ENCODE measurements at regions of chr1 and their contacts with region 1.

Region 1: DNA sequence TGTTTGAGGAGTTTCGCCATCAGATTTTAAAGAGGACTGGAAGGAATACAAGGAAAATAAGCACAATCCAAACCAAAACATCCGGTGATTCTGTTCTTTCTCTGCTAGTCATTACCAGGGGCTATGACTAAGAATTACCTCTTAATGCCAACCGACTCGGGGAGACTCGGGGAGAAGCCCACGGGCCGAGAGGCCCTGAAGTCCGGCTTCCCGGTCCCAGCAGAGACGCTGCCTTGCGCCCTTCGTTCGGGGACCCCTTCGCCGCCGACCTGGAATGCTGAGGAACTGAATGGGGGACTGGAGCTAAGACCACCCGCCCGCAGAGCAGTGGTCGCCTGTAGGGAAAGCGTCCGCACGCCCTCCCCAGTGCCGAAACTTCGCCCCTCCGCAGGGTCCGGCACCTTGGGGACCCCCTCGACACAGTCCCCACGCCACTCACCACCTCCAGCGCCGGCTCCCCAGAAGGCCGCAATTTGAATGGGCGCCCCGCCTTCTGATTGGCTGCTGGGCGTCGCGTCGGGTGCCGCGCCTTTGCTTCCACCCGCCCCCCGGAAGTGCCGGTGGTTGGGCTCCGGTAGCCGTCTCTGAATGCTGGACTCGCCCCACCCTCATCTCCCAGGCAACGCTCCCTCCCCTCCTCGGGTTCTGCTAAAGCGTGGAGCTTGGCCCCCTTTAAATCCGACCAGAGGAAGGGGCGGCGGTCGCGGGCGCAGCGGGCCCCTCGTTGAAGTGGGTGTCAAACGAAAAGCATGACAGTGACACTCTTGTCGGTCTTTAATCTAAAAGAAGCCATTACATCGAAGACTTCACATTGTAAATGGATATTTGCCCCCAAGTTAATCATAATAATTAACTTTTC is at the start of gene KIF14:
- DNase-seq: peak; percentile 91 to 94
- ATAC-seq: peak; percentile 98 to 99 (median 98)
- H3K4me3 ChIP-seq: peak within 1 kb of the TSS; percentile 61
- H3K4me3 Mint-ChIP-seq: peak within 1 kb of the TSS; percentile 99
- H3K27ac ChIP-seq: peak within 1 kb of the TSS; percentile 53
- H3K27ac Mint-ChIP-seq: peak within 1 kb of the TSS; percentile 90 to 97
- H3K4me1 ChIP-seq: peaks cover 11% of the 10 kb centered on the region
- H3K4me1 Mint-ChIP-seq: peaks cover 11 to 12% of the 10 kb centered on the region in 2 donors
- H3K27me3 ChIP-seq: no peaks in the 10 kb centered on the region
- H3K27me3 Mint-ChIP-seq: no peaks in the 10 kb centered on the region
- CTCF ChIP-seq: no peak
- total RNA-seq, gene KIF14: 0.40 to 0.48 (median 0.40) TPM

Region 2: GRCh38 chr1:199747984-199748383 is 872.5 kb before region 1 on chr1:
- intact Hi-C with region 1: no loop called
- DNase-seq: no peak
- ATAC-seq: no peak
- H3K4me3 ChIP-seq: no peak overlapping the region
- H3K4me3 Mint-ChIP-seq: no peak overlapping the region
- H3K27ac ChIP-seq: no peak overlapping the region
- H3K27ac Mint-ChIP-seq: no peak overlapping the region
- H3K4me1 ChIP-seq: no peaks in the 10 kb centered on the region
- H3K4me1 Mint-ChIP-seq: no peaks in the 10 kb centered on the region
- H3K27me3 ChIP-seq: no peaks in the 10 kb centered on the region
- H3K27me3 Mint-ChIP-seq: no peaks in the 10 kb centered on the region
- CTCF ChIP-seq: no peak

Region 3: GRCh38 chr1:200669314-200670241 is 49.1 kb after region 1 on chr1 and contains the start of gene DDX59:
- intact Hi-C with region 1: loop called (anchors 1 kb)
- DNase-seq: peak; percentile 83 to 93
- ATAC-seq: peak; percentile 83 to 91 (median 84)
- H3K4me3 ChIP-seq: peak within 1 kb of the TSS; percentile 63
- H3K4me3 Mint-ChIP-seq: peak within 1 kb of the TSS; percentile 94
- H3K27ac ChIP-seq: peak within 1 kb of the TSS; percentile 88
- H3K27ac Mint-ChIP-seq: peak within 1 kb of the TSS; percentile 78 to 92
- H3K4me1 ChIP-seq: peaks cover 13% of the 10 kb centered on the region
- H3K4me1 Mint-ChIP-seq: peaks cover 37 to 41% of the 10 kb centered on the region in 2 donors
- H3K27me3 ChIP-seq: no peaks in the 10 kb centered on the region
- H3K27me3 Mint-ChIP-seq: no peaks in the 10 kb centered on the region
- CTCF ChIP-seq: no peak
- total RNA-seq, gene DDX59: 31.9 to 39.9 (median 38.7) TPM

Region 4: GRCh38 chr1:200802865-200803512 is 182.5 kb after region 1 on chr1:
- intact Hi-C with region 1: loop called (anchors 1 kb)
- DNase-seq: peak; percentile 48 to 89
- ATAC-seq: peak; percentile 82 to 89 (median 85)
- H3K4me3 ChIP-seq: no peak overlapping the region
- H3K4me3 Mint-ChIP-seq: no peak overlapping the region
- H3K27ac ChIP-seq: no peak overlapping the region
- H3K27ac Mint-ChIP-seq: no peak overlapping the region
- H3K4me1 ChIP-seq: no peaks in the 10 kb centered on the region
- H3K4me1 Mint-ChIP-seq: peaks cover 0 to 6% of the 10 kb centered on the region in 2 donors
- H3K27me3 ChIP-seq: no peaks in the 10 kb centered on the region
- H3K27me3 Mint-ChIP-seq: peaks cover 19 to 27% of the 10 kb centered on the region in 2 donors
- CTCF ChIP-seq: peak; percentile 90

Region 5: GRCh38 chr1:201023517-201023902 is 403.0 kb after region 1 on chr1 and contains the start of gene KIF21B:
- intact Hi-C with region 1: loop called (anchors 1 kb)
- DNase-seq: peak; percentile 93 to 94
- ATAC-seq: peak; percentile 81 to 94 (median 84)
- H3K4me3 ChIP-seq: peak within 1 kb of the TSS; percentile 68
- H3K4me3 Mint-ChIP-seq: peak within 1 kb of the TSS; percentile 98
- H3K27ac ChIP-seq: peak within 1 kb of the TSS; percentile 80
- H3K27ac Mint-ChIP-seq: peak within 1 kb of the TSS; percentile 98 to 99
- H3K4me1 ChIP-seq: peaks cover 69% of the 10 kb centered on the region
- H3K4me1 Mint-ChIP-seq: peaks cover 49 to 61% of the 10 kb centered on the region in 2 donors
- H3K27me3 ChIP-seq: no peaks in the 10 kb centered on the region
- H3K27me3 Mint-ChIP-seq: no peaks in the 10 kb centered on the region
- CTCF ChIP-seq: no peak
- total RNA-seq, gene KIF21B: 102 to 129 (median 126) TPM

Region 6: GRCh38 chr1:201042779-201043461 is 422.4 kb after region 1 on chr1:
- intact Hi-C with region 1: loop called (anchors 2 kb)
- DNase-seq: peak; percentile 57 to 88
- ATAC-seq: peak; percentile 80 to 99 (median 94)
- H3K4me3 ChIP-seq: no peak overlapping the region
- H3K4me3 Mint-ChIP-seq: no peak overlapping the region
- H3K27ac ChIP-seq: no peak overlapping the region
- H3K27ac Mint-ChIP-seq: no peak overlapping the region
- H3K4me1 ChIP-seq: peaks cover 4% of the 10 kb centered on the region
- H3K4me1 Mint-ChIP-seq: peaks cover 0 to 5% of the 10 kb centered on the region in 2 donors
- H3K27me3 ChIP-seq: no peaks in the 10 kb centered on the region
- H3K27me3 Mint-ChIP-seq: peaks cover 0 to 6% of the 10 kb centered on the region in 2 donors
- CTCF ChIP-seq: peak; percentile 86

Region 7: GRCh38 chr1:201114236-201115131 is 494.0 kb after region 1 on chr1:
- intact Hi-C with region 1: loop called (anchors 5 kb)
- DNase-seq: peak; percentile 56 to 85
- ATAC-seq: peak; percentile 86 to 87 (median 87)
- H3K4me3 ChIP-seq: peak overlapping the region; percentile 52
- H3K4me3 Mint-ChIP-seq: peak overlapping the region; percentile 91
- H3K27ac ChIP-seq: no peak overlapping the region
- H3K27ac Mint-ChIP-seq: peak overlapping the region in 1 of 2 donors; percentile 88
- H3K4me1 ChIP-seq: peaks cover 9% of the 10 kb centered on the region
- H3K4me1 Mint-ChIP-seq: peaks cover 8 to 12% of the 10 kb centered on the region in 2 donors
- H3K27me3 ChIP-seq: peaks cover 7% of the 10 kb centered on the region
- H3K27me3 Mint-ChIP-seq: peaks cover 7 to 13% of the 10 kb centered on the region in 2 donors
- CTCF ChIP-seq: peak; percentile 72

Measured in natural killer cell (primary cell).